ENCODE measurements at regions of chr2 and their contacts with region 1.

Region 1: GRCh38 chr2:48600204-48600813 is 17.3 kb upstream of the GTF2A1L start:
- DNase-seq: no peak
- H3K4me3 Mint-ChIP-seq: no peak overlapping the region
- H3K27ac Mint-ChIP-seq: no peak overlapping the region
- H3K4me1 Mint-ChIP-seq: no peaks in the 10 kb centered on the region
- H3K27me3 Mint-ChIP-seq: peaks cover 4% of the 10 kb centered on the region

Region 2: GRCh38 chr2:48545244-48545643 is 55.1 kb before region 1 on chr2:
- CTCF ChIA-PET with region 1: no interaction called
- intact Hi-C with region 1: no loop called
- DNase-seq: no peak
- H3K4me3 Mint-ChIP-seq: no peak overlapping the region
- H3K27ac Mint-ChIP-seq: no peak overlapping the region
- H3K4me1 Mint-ChIP-seq: no peaks in the 10 kb centered on the region
- H3K27me3 Mint-ChIP-seq: no peaks in the 10 kb centered on the region

Region 3: GRCh38 chr2:48755473-48755872 is 155.2 kb after region 1 on chr2 and contains the start of gene LHCGR:
- CTCF ChIA-PET with region 1: no interaction called
- intact Hi-C with region 1: loop called (anchors 10 kb)
- DNase-seq: no peak
- H3K4me3 Mint-ChIP-seq: no peak within 1 kb of the TSS
- H3K27ac Mint-ChIP-seq: no peak within 1 kb of the TSS
- H3K4me1 Mint-ChIP-seq: peaks cover 2% of the 10 kb centered on the region
- H3K27me3 Mint-ChIP-seq: peaks cover 22% of the 10 kb centered on the region
- total RNA-seq, gene LHCGR: not detected